ENCODE measurements at regions of chr6 and their contacts with region 1.

Region 1: GRCh38 chr6:105077596-105078385 is 102.0 kb downstream of the POPDC3 start:
- DNase-seq: peak in 2 of 14 experiments; percentile 12 to 15
- ATAC-seq: no peak
- H3K4me3 ChIP-seq: no peak overlapping the region
- H3K4me3 Mint-ChIP-seq: no peak overlapping the region
- H3K27ac ChIP-seq: no peak overlapping the region
- H3K27ac Mint-ChIP-seq: no peak overlapping the region
- H3K4me1 ChIP-seq: no peaks in the 10 kb centered on the region
- H3K4me1 Mint-ChIP-seq: no peaks in the 10 kb centered on the region
- H3K27me3 ChIP-seq: no peaks in the 10 kb centered on the region
- H3K27me3 Mint-ChIP-seq: peaks cover 9% of the 10 kb centered on the region
- CTCF ChIP-seq: no peak

Region 2: DNA sequence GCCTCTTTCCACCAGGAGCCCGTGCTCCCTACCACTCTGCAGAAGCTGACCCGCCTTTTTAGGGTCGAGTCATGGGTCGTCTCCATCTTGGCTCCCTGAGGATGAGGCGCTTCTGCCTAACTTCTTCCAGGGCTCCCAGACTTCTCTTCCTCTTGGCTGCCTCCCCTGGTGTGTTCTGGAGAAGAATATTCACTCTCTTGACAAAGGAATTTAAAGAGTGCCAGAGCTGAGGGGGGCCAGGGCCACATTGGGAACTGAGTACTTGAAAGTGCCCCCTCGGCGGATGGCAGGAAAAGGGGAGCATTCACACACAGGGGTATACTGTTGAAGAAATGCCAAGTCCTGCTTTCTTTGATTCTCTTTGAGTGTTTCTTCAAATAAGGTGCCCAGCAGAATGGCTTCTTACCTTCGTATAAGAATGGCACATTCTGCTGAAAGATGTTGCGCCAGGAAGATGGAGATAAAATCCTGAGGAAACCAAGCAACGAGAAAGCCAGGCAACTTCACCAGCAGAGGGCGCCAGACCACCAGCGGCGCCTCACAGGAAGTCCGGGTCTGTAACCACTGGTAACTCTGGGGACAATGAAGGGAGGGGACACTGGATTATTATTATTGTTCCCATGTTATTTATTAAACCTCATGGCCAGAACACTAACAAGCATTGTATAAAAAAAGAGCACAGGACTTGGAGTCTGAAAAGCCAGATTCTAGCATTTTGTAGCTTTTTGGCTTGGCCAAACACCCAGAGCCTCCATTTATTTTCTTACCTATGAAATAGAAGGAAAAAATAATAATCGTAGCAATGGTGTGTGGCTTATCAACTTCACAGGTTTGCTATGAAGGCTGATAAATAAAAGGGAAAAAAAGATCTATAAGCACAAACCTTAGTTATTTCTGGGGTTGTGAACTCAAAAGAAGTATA is 394.8 kb before region 1 on chr6:
- CTCF ChIA-PET with region 1: no interaction called
- POLR2A ChIA-PET with region 1: no interaction called
- intact Hi-C with region 1: loop called (anchors 2 to 5 kb)
- DNase-seq: peak; percentile 51 to 83 (median 63)
- ATAC-seq: peak; percentile 55
- H3K4me3 ChIP-seq: no peak overlapping the region
- H3K4me3 Mint-ChIP-seq: no peak overlapping the region
- H3K27ac ChIP-seq: no peak overlapping the region
- H3K27ac Mint-ChIP-seq: no peak overlapping the region
- H3K4me1 ChIP-seq: peaks cover 14% of the 10 kb centered on the region
- H3K4me1 Mint-ChIP-seq: peaks cover 24% of the 10 kb centered on the region
- H3K27me3 ChIP-seq: no peaks in the 10 kb centered on the region
- H3K27me3 Mint-ChIP-seq: no peaks in the 10 kb centered on the region
- CTCF ChIP-seq: peak; percentile 97

Region 3: DNA sequence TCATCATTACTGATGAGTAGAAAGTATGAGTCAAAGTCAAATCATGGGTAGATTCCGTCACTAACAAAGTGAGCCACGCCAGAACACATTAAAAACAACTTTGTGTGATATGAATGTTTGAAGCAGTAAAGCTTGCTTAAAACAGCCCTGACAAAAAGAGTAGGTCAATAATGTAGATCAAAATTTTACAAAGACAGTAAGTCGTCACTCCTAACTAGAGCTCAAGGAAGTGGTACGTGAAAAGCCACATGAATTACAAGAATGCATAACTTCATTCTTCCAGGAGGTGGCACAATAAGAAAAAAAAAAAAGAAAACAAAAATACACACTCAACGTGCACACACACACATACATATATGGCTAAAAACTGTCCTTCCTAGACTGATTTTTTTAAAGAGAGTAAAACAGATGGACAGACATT is 288.0 kb before region 1 on chr6:
- CTCF ChIA-PET with region 1: interaction called, 3 read pairs
- POLR2A ChIA-PET with region 1: no interaction called
- intact Hi-C with region 1: loop called (anchors 2 to 5 kb)
- DNase-seq: peak in 3 of 14 experiments; percentile 60 to 62 (median 61)
- ATAC-seq: peak; percentile 94
- H3K4me3 ChIP-seq: no peak overlapping the region
- H3K4me3 Mint-ChIP-seq: peak overlapping the region; percentile 1
- H3K27ac ChIP-seq: no peak overlapping the region
- H3K27ac Mint-ChIP-seq: peak overlapping the region; percentile 10
- H3K4me1 ChIP-seq: no peaks in the 10 kb centered on the region
- H3K4me1 Mint-ChIP-seq: peaks cover 28% of the 10 kb centered on the region
- H3K27me3 ChIP-seq: no peaks in the 10 kb centered on the region
- H3K27me3 Mint-ChIP-seq: no peaks in the 10 kb centered on the region
- CTCF ChIP-seq: peak; percentile 50

Measured in CD4-positive, alpha-beta T cell (primary cell).